ENCODE measurements at regions of chr16 and their contacts with region 1.

Region 1: DNA sequence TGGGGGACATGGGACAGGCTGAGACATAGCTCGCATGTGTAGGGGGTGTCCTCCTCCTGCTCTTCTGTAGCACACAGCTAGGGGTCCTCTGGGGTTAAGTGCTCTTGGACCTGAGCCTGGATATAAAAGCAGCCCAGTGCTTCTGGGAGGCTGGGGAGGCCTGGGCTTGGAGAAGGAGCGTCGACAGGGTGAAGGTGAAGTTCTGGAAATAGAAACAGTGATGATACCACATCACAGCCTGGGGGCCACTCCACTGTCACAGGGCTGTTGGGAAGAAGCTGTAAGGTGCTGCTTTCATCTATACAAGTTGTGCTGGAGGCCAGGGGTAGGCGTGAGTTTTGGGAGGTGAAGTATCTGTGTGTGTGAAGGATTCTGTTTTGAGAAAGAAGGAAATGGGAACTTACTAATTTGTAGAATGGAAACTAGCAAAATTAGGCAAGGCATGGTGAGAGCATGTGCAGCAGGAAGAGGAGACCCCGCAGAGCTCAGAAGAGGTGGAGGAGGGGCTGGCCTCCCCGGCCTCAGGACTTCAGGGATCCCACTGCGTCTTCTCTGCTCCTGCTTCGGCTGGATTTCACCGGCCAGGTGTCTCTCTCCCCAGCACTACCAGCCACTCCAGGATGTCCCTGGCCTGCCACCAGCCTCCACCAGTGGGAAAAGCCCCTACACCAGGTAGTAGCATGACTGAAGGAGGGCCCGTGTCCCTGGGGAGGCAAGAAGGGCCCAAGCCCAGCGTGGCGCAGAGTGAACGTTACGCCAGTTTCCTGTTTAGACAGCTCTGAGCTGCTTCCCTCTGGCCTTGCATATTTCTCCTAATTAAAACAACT is 19.4 kb downstream of the PLCG2 start:
- DNase-seq: peak; percentile 74
- ATAC-seq: peak; percentile 80
- H3K4me3 Mint-ChIP-seq: peak overlapping the region; percentile 67
- H3K27ac Mint-ChIP-seq: peak overlapping the region; percentile 89
- H3K4me1 Mint-ChIP-seq: peaks cover 87% of the 10 kb centered on the region
- H3K27me3 Mint-ChIP-seq: no peaks in the 10 kb centered on the region
- CTCF ChIP-seq: no peak

Region 2: DNA sequence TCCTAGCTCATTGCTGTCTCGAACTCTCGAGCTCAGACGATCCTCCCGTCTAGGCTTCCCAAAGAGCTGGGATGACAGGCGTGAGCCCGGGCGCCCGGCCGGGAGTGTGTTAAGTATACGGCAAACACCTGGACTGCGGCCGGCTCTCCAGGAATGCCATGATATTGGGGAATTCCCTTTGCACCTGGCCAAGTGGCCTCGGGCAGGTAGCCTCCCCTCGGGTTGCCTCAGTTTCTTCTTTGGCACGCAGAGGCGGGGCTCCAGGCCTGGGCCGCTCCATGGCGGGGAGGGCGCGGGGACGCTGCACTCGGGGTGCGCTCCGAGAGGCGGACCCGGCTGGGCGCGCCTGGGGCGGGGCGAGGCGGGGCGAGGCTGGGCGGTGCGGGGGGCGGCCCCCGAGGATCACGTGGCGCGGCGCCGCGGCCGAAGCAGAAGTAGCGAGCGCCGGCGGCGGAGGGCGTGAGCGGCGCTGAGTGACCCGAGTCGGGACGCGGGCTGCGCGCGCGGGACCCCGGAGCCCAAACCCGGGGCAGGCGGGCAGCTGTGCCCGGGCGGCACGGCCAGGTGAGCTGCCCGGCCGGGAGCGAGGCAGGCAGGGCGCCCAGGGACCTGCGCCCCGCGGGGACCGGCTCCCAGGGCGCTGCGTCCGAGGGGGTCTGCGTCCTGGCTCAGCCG is 19.5 kb before region 1 on chr16 and contains the start of gene PLCG2:
- CTCF ChIA-PET with region 1: interaction called, 3 read pairs
- POLR2A ChIA-PET with region 1: interaction called, 34 read pairs
- intact Hi-C with region 1: loop called (anchors 1 kb)
- DNase-seq: peak; percentile 92
- ATAC-seq: peak; percentile 83
- H3K4me3 Mint-ChIP-seq: peak within 1 kb of the TSS; percentile 97
- H3K27ac Mint-ChIP-seq: peak within 1 kb of the TSS; percentile 91
- H3K4me1 Mint-ChIP-seq: peaks cover 71% of the 10 kb centered on the region
- H3K27me3 Mint-ChIP-seq: no peaks in the 10 kb centered on the region
- CTCF ChIP-seq: no peak
- total RNA-seq, gene PLCG2: 449 and 525 TPM in 2 replicates

Region 3: GRCh38 chr16:81808933-81809496 is 10.5 kb after region 1 on chr16:
- CTCF ChIA-PET with region 1: interaction called, 6 read pairs
- POLR2A ChIA-PET with region 1: interaction called, 111 read pairs
- intact Hi-C with region 1: loop called (anchors 1 kb)
- DNase-seq: peak; percentile 56
- ATAC-seq: peak; percentile 79
- H3K4me3 Mint-ChIP-seq: peak overlapping the region; percentile 65
- H3K27ac Mint-ChIP-seq: peak overlapping the region; percentile 92
- H3K4me1 Mint-ChIP-seq: peaks cover 98% of the 10 kb centered on the region
- H3K27me3 Mint-ChIP-seq: no peaks in the 10 kb centered on the region
- CTCF ChIP-seq: no peak

Region 4: DNA sequence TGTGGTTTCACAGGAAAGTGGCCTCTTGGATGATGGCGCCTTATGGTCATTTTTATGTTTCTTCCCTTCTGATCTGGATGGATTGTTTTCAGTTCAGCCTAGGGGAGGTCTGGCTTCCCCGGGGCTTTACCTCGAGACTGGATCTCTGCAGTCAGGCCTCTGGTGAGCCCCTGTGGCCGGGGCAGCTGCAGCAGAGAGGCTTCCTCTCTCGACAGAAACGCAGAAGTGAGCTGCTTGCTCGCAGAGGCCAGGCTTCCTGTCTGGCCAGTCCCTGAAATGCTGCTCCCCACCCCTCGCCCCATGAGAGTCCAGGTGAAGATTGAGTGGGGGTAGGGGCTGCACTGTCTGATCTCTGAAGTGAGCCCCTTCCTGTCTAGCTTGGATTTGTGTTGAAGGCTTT is 24.6 kb after region 1 on chr16:
- CTCF ChIA-PET with region 1: interaction called, 13 read pairs
- POLR2A ChIA-PET with region 1: interaction called, 194 read pairs
- intact Hi-C with region 1: loop called (anchors 1 kb)
- DNase-seq: peak; percentile 67
- ATAC-seq: peak; percentile 65
- H3K4me3 Mint-ChIP-seq: peak overlapping the region; percentile 80
- H3K27ac Mint-ChIP-seq: peak overlapping the region; percentile 97
- H3K4me1 Mint-ChIP-seq: peaks cover 99% of the 10 kb centered on the region
- H3K27me3 Mint-ChIP-seq: no peaks in the 10 kb centered on the region
- CTCF ChIP-seq: no peak

Region 5: GRCh38 chr16:81838794-81839193 is 40.3 kb after region 1 on chr16:
- CTCF ChIA-PET with region 1: interaction called, 3 read pairs
- POLR2A ChIA-PET with region 1: interaction called, 13 read pairs
- intact Hi-C with region 1: loop called (anchors 1 kb)
- DNase-seq: no peak
- ATAC-seq: peak; percentile 38
- H3K4me3 Mint-ChIP-seq: peak overlapping the region; percentile 73
- H3K27ac Mint-ChIP-seq: peak overlapping the region; percentile 93
- H3K4me1 Mint-ChIP-seq: peaks cover 96% of the 10 kb centered on the region
- H3K27me3 Mint-ChIP-seq: no peaks in the 10 kb centered on the region
- CTCF ChIP-seq: no peak